CD4-positive, alpha-beta memory T cell (primary cell): ENCODE measurements at regions of chr5 and their contacts with region 1.

Region 1: GRCh38 chr5:52948418-52949076 is 40.6 kb upstream of the ITGA2 start:
- DNase-seq: peak; percentile 64 to 72 (median 66)
- H3K4me3 ChIP-seq: no peak overlapping the region
- H3K4me3 Mint-ChIP-seq: no peak overlapping the region
- H3K27ac ChIP-seq: no peak overlapping the region
- H3K27ac Mint-ChIP-seq: no peak overlapping the region
- H3K4me1 ChIP-seq: peaks cover 9% of the 10 kb centered on the region
- H3K4me1 Mint-ChIP-seq: peaks cover 8 to 13% (median 11%) of the 10 kb centered on the region in 4 donors
- H3K27me3 ChIP-seq: no peaks in the 10 kb centered on the region
- H3K27me3 Mint-ChIP-seq: no peaks in the 10 kb centered on the region

Region 2: DNA sequence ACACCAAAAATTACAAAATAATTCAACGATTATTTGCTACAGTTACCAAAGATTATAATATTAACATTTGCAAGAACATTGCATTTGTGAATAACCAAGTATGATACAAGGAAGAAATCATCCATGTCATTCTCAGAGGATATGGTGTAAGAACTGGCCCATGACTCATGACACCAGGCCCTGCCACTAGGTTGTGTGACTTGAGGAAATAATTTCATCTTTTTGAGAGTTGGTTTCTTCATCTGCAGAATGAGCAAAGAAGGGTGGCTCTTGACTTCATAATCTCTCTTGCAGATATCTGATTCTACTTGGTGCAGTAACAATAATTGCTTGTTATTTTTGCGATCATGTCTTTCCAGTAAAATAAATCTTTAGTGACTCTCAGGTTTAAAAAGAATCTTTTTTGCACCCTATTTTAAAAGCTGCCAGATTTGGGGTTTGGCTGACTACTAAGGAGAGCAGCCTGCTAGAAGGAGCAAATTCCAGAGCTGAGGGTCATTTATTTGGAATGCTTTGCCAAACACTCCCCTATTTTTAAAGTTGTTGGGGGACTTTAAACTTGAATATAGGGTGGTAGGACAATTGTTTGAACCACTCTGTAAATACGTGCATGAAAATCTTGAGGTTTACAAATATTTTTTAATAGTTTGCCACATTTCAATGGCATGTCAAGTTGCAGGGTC is 137.3 kb before region 1 on chr5:
- CTCF ChIA-PET with region 1: no interaction called
- POLR2A ChIA-PET with region 1: no interaction called
- intact Hi-C with region 1: no loop called
- DNase-seq: no peak
- H3K4me3 ChIP-seq: no peak overlapping the region
- H3K4me3 Mint-ChIP-seq: no peak overlapping the region
- H3K27ac ChIP-seq: no peak overlapping the region
- H3K27ac Mint-ChIP-seq: no peak overlapping the region
- H3K4me1 ChIP-seq: no peaks in the 10 kb centered on the region
- H3K4me1 Mint-ChIP-seq: peaks cover 0 to 3% (median 1%) of the 10 kb centered on the region in 4 donors
- H3K27me3 ChIP-seq: no peaks in the 10 kb centered on the region
- H3K27me3 Mint-ChIP-seq: peaks cover 0 to 2% of the 10 kb centered on the region in 2 donors

Region 3: GRCh38 chr5:52922386-52922785 is 26.2 kb before region 1 on chr5:
- CTCF ChIA-PET with region 1: no interaction called
- POLR2A ChIA-PET with region 1: no interaction called
- intact Hi-C with region 1: no loop called
- DNase-seq: no peak
- H3K4me3 ChIP-seq: no peak overlapping the region
- H3K4me3 Mint-ChIP-seq: no peak overlapping the region
- H3K27ac ChIP-seq: no peak overlapping the region
- H3K27ac Mint-ChIP-seq: no peak overlapping the region
- H3K4me1 ChIP-seq: no peaks in the 10 kb centered on the region
- H3K4me1 Mint-ChIP-seq: peaks cover 0 to 2% (median 0%) of the 10 kb centered on the region in 4 donors
- H3K27me3 ChIP-seq: no peaks in the 10 kb centered on the region
- H3K27me3 Mint-ChIP-seq: peaks cover 2 to 4% of the 10 kb centered on the region in 2 donors

Region 4: GRCh38 chr5:52989781-52990527 is 41.4 kb after region 1 on chr5:
- CTCF ChIA-PET with region 1: interaction called, 24 read pairs
- POLR2A ChIA-PET with region 1: no interaction called
- intact Hi-C with region 1: loop called (anchors 2 kb)
- DNase-seq: peak in 4 of 5 donors; percentile 15 to 29 (median 23)
- H3K4me3 ChIP-seq: peak overlapping the region; percentile 67 to 84
- H3K4me3 Mint-ChIP-seq: peak overlapping the region; percentile 76 to 88 (median 80)
- H3K27ac ChIP-seq: no peak overlapping the region
- H3K27ac Mint-ChIP-seq: peak overlapping the region in 1 of 7 donors; percentile 17
- H3K4me1 ChIP-seq: peaks cover 9% of the 10 kb centered on the region
- H3K4me1 Mint-ChIP-seq: peaks cover 3 to 20% (median 12%) of the 10 kb centered on the region in 4 donors
- H3K27me3 ChIP-seq: no peaks in the 10 kb centered on the region
- H3K27me3 Mint-ChIP-seq: peaks cover 0 to 1% of the 10 kb centered on the region in 2 donors

Region 5: GRCh38 chr5:53001541-53001940 is 53.0 kb after region 1 on chr5:
- CTCF ChIA-PET with region 1: no interaction called
- POLR2A ChIA-PET with region 1: no interaction called
- intact Hi-C with region 1: no loop called
- DNase-seq: no peak
- H3K4me3 ChIP-seq: no peak overlapping the region
- H3K4me3 Mint-ChIP-seq: no peak overlapping the region
- H3K27ac ChIP-seq: no peak overlapping the region
- H3K27ac Mint-ChIP-seq: no peak overlapping the region
- H3K4me1 ChIP-seq: peaks cover 2% of the 10 kb centered on the region
- H3K4me1 Mint-ChIP-seq: peaks cover 5 to 16% (median 7%) of the 10 kb centered on the region in 4 donors
- H3K27me3 ChIP-seq: no peaks in the 10 kb centered on the region
- H3K27me3 Mint-ChIP-seq: no peaks in the 10 kb centered on the region

Region 6: GRCh38 chr5:53089345-53089991 is 140.9 kb after region 1 on chr5:
- CTCF ChIA-PET with region 1: interaction called, 120 read pairs
- POLR2A ChIA-PET with region 1: interaction called, 5 read pairs
- intact Hi-C with region 1: no loop called
- DNase-seq: peak in 4 of 5 donors; percentile 30 to 63 (median 40)
- H3K4me3 ChIP-seq: no peak overlapping the region
- H3K4me3 Mint-ChIP-seq: peak overlapping the region; percentile 10 to 68 (median 62)
- H3K27ac ChIP-seq: no peak overlapping the region
- H3K27ac Mint-ChIP-seq: peak overlapping the region; percentile 1 to 79 (median 45)
- H3K4me1 ChIP-seq: peaks cover 27% of the 10 kb centered on the region
- H3K4me1 Mint-ChIP-seq: peaks cover 10 to 26% (median 17%) of the 10 kb centered on the region in 4 donors
- H3K27me3 ChIP-seq: no peaks in the 10 kb centered on the region
- H3K27me3 Mint-ChIP-seq: no peaks in the 10 kb centered on the region

Region 7: GRCh38 chr5:53109443-53110127 is 161.0 kb after region 1 on chr5 and contains the start of gene MOCS2:
- CTCF ChIA-PET with region 1: interaction called, 21 read pairs
- POLR2A ChIA-PET with region 1: interaction called, 5 read pairs
- intact Hi-C with region 1: no loop called
- DNase-seq: peak; percentile 86 to 93 (median 91)
- H3K4me3 ChIP-seq: peak within 1 kb of the TSS; percentile 82 to 97
- H3K4me3 Mint-ChIP-seq: peak within 1 kb of the TSS; percentile 90 to 98 (median 95)
- H3K27ac ChIP-seq: peak within 1 kb of the TSS; percentile 68
- H3K27ac Mint-ChIP-seq: peak within 1 kb of the TSS; percentile 75 to 97 (median 95)
- H3K4me1 ChIP-seq: peaks cover 34% of the 10 kb centered on the region
- H3K4me1 Mint-ChIP-seq: peaks cover 31 to 59% (median 40%) of the 10 kb centered on the region in 4 donors
- H3K27me3 ChIP-seq: no peaks in the 10 kb centered on the region
- H3K27me3 Mint-ChIP-seq: no peaks in the 10 kb centered on the region
- total RNA-seq, gene MOCS2: 23.1 to 26.6 TPM

Region 8: GRCh38 chr5:54217826-54218503 is 1269.4 kb after region 1 on chr5:
- CTCF ChIA-PET with region 1: no interaction called
- POLR2A ChIA-PET with region 1: no interaction called
- intact Hi-C with region 1: loop called (anchors 1 kb)
- DNase-seq: peak in 4 of 5 donors; percentile 10 to 32 (median 22)
- H3K4me3 ChIP-seq: no peak overlapping the region
- H3K4me3 Mint-ChIP-seq: no peak overlapping the region
- H3K27ac ChIP-seq: no peak overlapping the region
- H3K27ac Mint-ChIP-seq: no peak overlapping the region
- H3K4me1 ChIP-seq: no peaks in the 10 kb centered on the region
- H3K4me1 Mint-ChIP-seq: peaks cover 3 to 11% (median 7%) of the 10 kb centered on the region in 4 donors
- H3K27me3 ChIP-seq: no peaks in the 10 kb centered on the region
- H3K27me3 Mint-ChIP-seq: no peaks in the 10 kb centered on the region